ENCODE measurements at regions of chr14 and their contacts with region 1.

Region 1: GRCh38 chr14:49852301-49853157 is at the start of gene NEMF:
- DNase-seq: peak; percentile 91
- ATAC-seq: peak; percentile 87
- H3K4me3 Mint-ChIP-seq: peak within 1 kb of the TSS; percentile 97
- H3K27ac Mint-ChIP-seq: peak within 1 kb of the TSS; percentile 97
- H3K4me1 Mint-ChIP-seq: peaks cover 32% of the 10 kb centered on the region
- H3K27me3 Mint-ChIP-seq: no peaks in the 10 kb centered on the region
- CTCF ChIP-seq: peak; percentile 92
- total RNA-seq, gene NEMF: 62.3 to 63.8 TPM

Region 2: DNA sequence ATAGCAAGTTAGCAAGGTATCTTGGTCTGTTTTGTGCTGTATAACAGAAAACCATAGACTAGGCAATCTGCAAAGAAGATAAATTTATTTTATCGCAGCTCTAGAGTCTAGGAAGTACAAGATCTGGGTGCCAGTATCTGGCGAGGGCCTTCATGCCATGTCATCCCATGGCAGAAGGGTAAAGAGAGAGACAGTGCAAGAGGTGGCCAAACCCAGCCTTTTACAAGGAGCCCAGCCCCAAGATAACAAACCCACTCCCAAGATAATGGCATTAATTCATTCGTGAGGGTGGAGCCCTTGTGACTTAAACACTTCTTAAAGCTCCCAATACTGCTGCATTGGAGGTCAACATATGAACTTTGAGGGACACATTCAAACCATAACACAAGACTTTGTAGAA is 283.2 kb before region 1 on chr14:
- CTCF ChIA-PET with region 1: no interaction called
- POLR2A ChIA-PET with region 1: no interaction called
- intact Hi-C with region 1: no loop called
- DNase-seq: no peak
- ATAC-seq: no peak
- H3K4me3 Mint-ChIP-seq: no peak overlapping the region
- H3K27ac Mint-ChIP-seq: no peak overlapping the region
- H3K4me1 Mint-ChIP-seq: peaks cover 3% of the 10 kb centered on the region
- H3K27me3 Mint-ChIP-seq: no peaks in the 10 kb centered on the region
- CTCF ChIP-seq: no peak

Region 3: DNA sequence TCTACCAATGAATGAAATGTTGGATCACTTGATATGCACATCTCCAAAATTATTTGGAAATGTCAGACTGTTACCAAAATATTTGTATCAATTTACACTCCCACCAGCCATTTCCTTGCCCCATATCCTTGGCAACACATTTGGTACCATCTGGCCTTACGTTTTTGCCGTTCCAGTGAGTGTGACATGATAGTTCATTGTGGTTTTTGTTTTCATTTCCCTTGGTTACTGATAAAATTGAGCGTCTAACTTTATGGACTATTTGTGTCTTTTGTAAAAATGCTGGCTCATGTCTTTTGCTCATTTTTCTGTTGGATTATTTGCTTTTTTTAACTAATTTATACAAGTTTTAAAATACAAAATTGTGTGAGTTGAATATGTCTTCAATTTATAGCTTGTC is 148.6 kb before region 1 on chr14:
- CTCF ChIA-PET with region 1: no interaction called
- POLR2A ChIA-PET with region 1: no interaction called
- intact Hi-C with region 1: no loop called
- DNase-seq: no peak
- ATAC-seq: no peak
- H3K4me3 Mint-ChIP-seq: no peak overlapping the region
- H3K27ac Mint-ChIP-seq: no peak overlapping the region
- H3K4me1 Mint-ChIP-seq: peaks cover 8% of the 10 kb centered on the region
- H3K27me3 Mint-ChIP-seq: no peaks in the 10 kb centered on the region
- CTCF ChIP-seq: no peak

Region 4: DNA sequence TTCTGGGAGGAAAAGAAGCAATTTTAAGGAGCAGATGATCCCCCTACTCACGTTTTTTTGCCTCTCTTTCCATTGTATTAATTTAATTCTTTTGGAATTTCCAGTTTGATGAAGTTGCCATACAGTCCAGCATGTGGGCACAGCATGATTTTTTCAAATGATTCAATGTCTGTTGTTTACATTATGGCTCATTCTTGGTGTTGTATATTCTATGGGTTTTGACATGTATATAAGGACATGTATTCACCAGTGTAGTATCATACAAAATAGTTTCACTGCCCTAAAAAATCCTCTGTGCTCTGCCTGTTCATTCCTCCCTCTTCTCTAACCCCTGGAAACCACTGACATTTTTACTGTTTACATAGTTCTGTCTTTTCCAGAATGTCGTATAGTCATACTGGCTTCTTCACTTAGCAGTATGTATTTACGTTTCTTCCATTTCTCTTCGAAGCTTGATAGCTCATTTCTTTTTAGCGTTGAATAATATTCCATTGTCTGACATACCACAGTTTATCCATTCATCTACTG is 97.9 kb before region 1 on chr14:
- CTCF ChIA-PET with region 1: no interaction called
- POLR2A ChIA-PET with region 1: no interaction called
- intact Hi-C with region 1: no loop called
- DNase-seq: no peak
- ATAC-seq: no peak
- H3K4me3 Mint-ChIP-seq: no peak overlapping the region
- H3K27ac Mint-ChIP-seq: no peak overlapping the region
- H3K4me1 Mint-ChIP-seq: no peaks in the 10 kb centered on the region
- H3K27me3 Mint-ChIP-seq: no peaks in the 10 kb centered on the region
- CTCF ChIP-seq: no peak

Region 5: GRCh38 chr14:49767562-49768300 is 84.8 kb before region 1 on chr14 and contains the start of gene KLHDC2:
- CTCF ChIA-PET with region 1: interaction called, 19 read pairs
- POLR2A ChIA-PET with region 1: interaction called, 5 read pairs
- intact Hi-C with region 1: no loop called
- DNase-seq: peak; percentile 90
- ATAC-seq: peak; percentile 84
- H3K4me3 Mint-ChIP-seq: peak within 1 kb of the TSS; percentile 93
- H3K27ac Mint-ChIP-seq: peak within 1 kb of the TSS; percentile 98
- H3K4me1 Mint-ChIP-seq: peaks cover 31% of the 10 kb centered on the region
- H3K27me3 Mint-ChIP-seq: no peaks in the 10 kb centered on the region
- CTCF ChIP-seq: peak; percentile 25
- total RNA-seq, gene KLHDC2: 21.1 to 23.4 TPM

Region 6: GRCh38 chr14:49828640-49829039 is 23.9 kb before region 1 on chr14:
- CTCF ChIA-PET with region 1: interaction called, 31 read pairs
- POLR2A ChIA-PET with region 1: interaction called, 5 read pairs
- intact Hi-C with region 1: no loop called
- DNase-seq: no peak
- ATAC-seq: no peak
- H3K4me3 Mint-ChIP-seq: no peak overlapping the region
- H3K27ac Mint-ChIP-seq: no peak overlapping the region
- H3K4me1 Mint-ChIP-seq: peaks cover 2% of the 10 kb centered on the region
- H3K27me3 Mint-ChIP-seq: no peaks in the 10 kb centered on the region
- CTCF ChIP-seq: no peak

Region 7: GRCh38 chr14:49892636-49893308 is 40.2 kb after region 1 on chr14 and contains the start of gene ARF6:
- CTCF ChIA-PET with region 1: no interaction called
- POLR2A ChIA-PET with region 1: interaction called, 15 read pairs
- intact Hi-C with region 1: no loop called
- DNase-seq: peak; percentile 98
- ATAC-seq: peak; percentile 80
- H3K4me3 Mint-ChIP-seq: peak within 1 kb of the TSS; percentile 88
- H3K27ac Mint-ChIP-seq: peak within 1 kb of the TSS; percentile 97
- H3K4me1 Mint-ChIP-seq: peaks cover 4% of the 10 kb centered on the region
- H3K27me3 Mint-ChIP-seq: no peaks in the 10 kb centered on the region
- CTCF ChIP-seq: no peak
- total RNA-seq, gene ARF6: 170 TPM

Region 8: GRCh38 chr14:50109342-50109741 is 256.8 kb after region 1 on chr14:
- CTCF ChIA-PET with region 1: interaction called, 40 read pairs
- POLR2A ChIA-PET with region 1: no interaction called
- intact Hi-C with region 1: no loop called
- DNase-seq: no peak
- ATAC-seq: no peak
- H3K4me3 Mint-ChIP-seq: no peak overlapping the region
- H3K27ac Mint-ChIP-seq: no peak overlapping the region
- H3K4me1 Mint-ChIP-seq: peaks cover 37% of the 10 kb centered on the region
- H3K27me3 Mint-ChIP-seq: no peaks in the 10 kb centered on the region
- CTCF ChIP-seq: no peak

Region 9: DNA sequence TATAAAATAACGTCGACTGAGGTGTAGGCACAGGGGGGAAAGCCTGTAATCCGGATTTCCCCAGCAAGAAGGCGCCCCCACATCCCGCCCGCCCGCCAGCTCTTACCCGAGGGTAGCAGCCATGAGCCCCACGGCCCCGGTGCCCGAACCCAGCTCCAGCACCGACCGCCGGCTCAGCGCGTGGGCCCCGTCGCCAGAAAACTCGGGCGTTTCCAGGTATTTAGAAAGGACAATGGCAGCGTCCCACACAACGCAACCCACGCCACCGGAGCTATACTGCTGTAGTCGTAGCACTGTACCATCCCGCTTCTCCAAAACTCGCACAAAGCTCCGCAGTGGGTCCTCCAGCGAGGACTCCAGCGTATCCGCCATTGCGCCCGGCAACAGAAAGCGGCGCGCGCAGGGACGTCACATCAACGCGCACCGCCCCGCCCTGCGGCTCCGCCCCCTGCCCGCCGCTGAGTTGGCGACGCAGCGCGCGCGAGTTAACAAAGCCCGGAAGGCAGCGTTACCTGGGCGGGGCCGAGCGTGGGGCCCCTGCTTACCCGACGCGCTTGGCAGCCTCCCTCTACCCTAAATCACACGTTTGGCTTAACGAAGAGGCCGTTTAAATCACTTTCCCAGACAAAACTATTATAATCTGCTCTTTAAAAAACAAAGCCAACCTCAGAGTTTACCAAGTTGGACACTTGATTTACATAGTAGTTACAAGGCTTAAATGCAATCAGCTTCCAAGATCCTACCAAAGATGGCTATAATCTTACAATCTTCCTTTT is 263.8 kb after region 1 on chr14 and contains the start of gene VCPKMT:
- CTCF ChIA-PET with region 1: interaction called, 24 read pairs
- POLR2A ChIA-PET with region 1: interaction called, 6 read pairs
- intact Hi-C with region 1: no loop called
- DNase-seq: peak; percentile 97
- ATAC-seq: peak; percentile 100
- H3K4me3 Mint-ChIP-seq: peak within 1 kb of the TSS; percentile 94
- H3K27ac Mint-ChIP-seq: peak within 1 kb of the TSS; percentile 98
- H3K4me1 Mint-ChIP-seq: peaks cover 32% of the 10 kb centered on the region
- H3K27me3 Mint-ChIP-seq: no peaks in the 10 kb centered on the region
- CTCF ChIP-seq: no peak
- total RNA-seq, gene VCPKMT: 11.4 to 11.6 TPM

Region 10: DNA sequence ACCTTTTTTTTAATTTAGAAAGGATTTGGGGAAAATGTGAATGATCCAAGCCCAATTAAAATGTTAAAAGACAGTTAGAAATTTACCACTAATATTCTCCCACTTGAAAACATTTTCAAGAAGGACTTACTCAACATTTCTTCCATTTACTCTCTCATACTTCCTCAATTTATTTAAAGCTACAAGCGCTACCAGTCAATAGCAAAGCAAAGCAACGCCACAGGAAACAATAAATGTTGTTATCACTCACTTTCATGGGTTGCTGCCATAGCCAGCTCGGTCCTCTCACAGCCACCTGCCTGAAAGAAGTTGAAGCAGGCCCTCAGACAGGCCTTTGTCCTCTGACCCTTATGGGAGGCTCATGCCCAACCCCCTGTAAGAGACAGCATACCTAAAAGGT is 384.9 kb after region 1 on chr14:
- CTCF ChIA-PET with region 1: no interaction called
- POLR2A ChIA-PET with region 1: no interaction called
- intact Hi-C with region 1: no loop called
- DNase-seq: no peak
- ATAC-seq: no peak
- H3K4me3 Mint-ChIP-seq: no peak overlapping the region
- H3K27ac Mint-ChIP-seq: no peak overlapping the region
- H3K4me1 Mint-ChIP-seq: peaks cover 11% of the 10 kb centered on the region
- H3K27me3 Mint-ChIP-seq: no peaks in the 10 kb centered on the region
- CTCF ChIP-seq: no peak

Measured in activated CD8-positive, alpha-beta T cell treated with anti-CD3 and anti-CD28 coated beads for 36 hours (primary cell).